ENCODE measurements at regions of chr3 and their contacts with region 1.

Region 1: DNA sequence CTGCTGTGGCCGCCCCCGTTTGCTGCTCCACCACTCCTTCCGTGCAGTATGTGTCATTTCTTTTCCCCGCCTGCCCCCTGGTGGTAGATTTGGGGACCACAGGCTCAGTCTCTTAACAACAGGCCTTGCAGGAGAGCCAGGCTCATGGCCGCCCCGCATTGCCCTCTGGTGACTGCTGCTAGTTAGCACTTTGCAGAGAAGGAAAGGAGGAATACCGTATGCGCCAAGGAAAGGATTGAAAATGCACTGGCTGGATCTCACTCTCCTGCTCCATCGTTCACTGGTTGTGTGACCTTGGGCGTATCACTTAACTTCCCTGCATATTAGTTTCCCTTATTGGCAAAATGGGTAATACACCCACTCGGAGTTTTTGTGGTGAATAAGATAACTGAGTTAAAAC is 39.3 kb upstream of the PXYLP1 start:
- DNase-seq: peak; percentile 98
- ATAC-seq: peak; percentile 99

Region 2: GRCh38 chr3:140898340-140899180 is 293.8 kb before region 1 on chr3:
- intact Hi-C with region 1: loop called (anchors 10 kb)
- DNase-seq: no peak
- ATAC-seq: peak; percentile 38

Region 3: DNA sequence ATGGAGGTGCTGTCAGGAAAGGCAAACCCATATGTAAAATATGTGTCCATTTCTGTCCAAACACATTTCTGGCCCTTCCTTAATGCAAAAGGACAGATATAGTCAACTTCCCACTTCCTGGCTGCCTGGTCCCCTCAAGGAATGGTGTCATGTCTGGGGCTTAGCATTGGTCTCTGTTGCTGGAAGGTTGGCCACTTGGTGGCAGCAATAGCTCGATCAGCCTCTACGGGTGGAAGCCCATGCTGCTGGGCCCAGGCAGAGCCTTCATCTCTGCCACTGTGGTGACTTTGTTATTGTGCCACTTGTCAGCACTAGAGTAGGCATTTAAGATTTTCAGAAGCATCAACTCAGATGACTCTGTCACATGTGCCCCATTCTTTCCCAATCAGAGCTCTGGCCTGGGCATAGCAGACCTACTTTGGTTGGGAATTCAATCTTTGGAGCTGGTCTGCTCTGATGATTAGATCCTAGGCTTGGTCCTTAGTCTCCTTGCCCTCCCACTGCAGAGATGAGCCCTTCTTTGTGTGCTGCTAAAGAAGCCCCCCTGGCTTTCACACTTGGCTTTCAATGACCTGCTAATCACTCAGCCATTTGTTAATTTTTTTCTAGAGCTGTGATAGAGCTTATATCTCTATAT is 192.2 kb before region 1 on chr3:
- intact Hi-C with region 1: loop called (anchors 1 kb)
- DNase-seq: no peak
- ATAC-seq: peak; percentile 95

Region 4: GRCh38 chr3:141011232-141011996 is 180.9 kb before region 1 on chr3:
- intact Hi-C with region 1: loop called (anchors 1 kb)
- DNase-seq: peak; percentile 87
- ATAC-seq: peak; percentile 77

Region 5: GRCh38 chr3:141105828-141106628 is 86.3 kb before region 1 on chr3:
- intact Hi-C with region 1: loop called (anchors 5 kb)
- DNase-seq: no peak
- ATAC-seq: no peak